Left ventricle myocardium superior (tissue), 1 donor: ENCODE measurements at regions of chr10 and their contacts with region 1.

Region 1: GRCh38 chr10:79399223-79399831 is 46.1 kb downstream of the ZCCHC24 start:
- DNase-seq: peak; percentile 92
- ATAC-seq: peak; percentile 77

Region 2: DNA sequence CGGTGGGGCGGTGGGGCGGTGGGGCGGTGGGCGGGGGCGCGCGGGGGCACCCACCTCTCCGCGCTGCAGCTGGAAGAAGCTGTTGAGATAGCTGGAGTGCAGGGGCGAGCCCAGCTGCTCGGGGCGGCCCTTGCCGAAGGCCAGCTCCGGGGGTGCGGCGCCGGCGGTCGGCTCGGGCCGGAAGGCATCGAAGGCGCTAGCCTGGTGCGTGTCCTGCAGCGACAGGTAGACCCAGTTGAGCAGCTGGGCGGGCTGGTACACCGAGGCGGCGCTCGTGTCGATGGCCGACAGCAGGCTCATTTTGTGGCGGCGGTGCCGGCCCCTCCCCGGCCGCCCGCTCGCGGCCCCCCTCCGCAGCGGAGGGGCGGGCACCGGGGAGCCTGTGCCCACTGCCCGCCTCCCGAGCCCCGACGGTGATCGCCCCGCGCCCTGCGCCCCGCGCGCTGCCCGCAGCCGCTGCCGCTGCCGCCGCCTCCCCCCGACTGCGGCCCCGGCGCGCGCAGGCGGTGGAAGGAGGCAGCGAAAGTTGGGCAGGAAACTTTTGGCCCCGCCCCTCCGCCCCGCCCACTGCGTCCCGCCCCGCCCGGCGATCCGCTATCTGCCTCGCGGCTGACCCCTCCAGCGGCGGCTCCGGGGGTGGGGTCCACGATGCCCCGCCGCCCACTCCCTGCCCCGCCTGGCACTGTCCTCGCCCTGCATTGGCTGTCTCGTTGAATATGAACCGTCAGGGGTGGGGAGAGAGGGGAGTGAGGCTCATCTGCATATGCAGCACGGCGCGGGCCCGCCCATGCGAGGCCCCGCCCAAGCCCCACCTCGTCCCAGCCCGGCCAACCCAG is 46.0 kb after region 1 on chr10 and contains the start of gene ZCCHC24:
- intact Hi-C with region 1: loop called (anchors 10 kb)
- DNase-seq: peak; percentile 99
- ATAC-seq: peak; percentile 91
- total RNA-seq, gene ZCCHC24: 49.0 TPM